ENCODE measurements at regions of chr14 and their contacts with region 1.

Region 1: DNA sequence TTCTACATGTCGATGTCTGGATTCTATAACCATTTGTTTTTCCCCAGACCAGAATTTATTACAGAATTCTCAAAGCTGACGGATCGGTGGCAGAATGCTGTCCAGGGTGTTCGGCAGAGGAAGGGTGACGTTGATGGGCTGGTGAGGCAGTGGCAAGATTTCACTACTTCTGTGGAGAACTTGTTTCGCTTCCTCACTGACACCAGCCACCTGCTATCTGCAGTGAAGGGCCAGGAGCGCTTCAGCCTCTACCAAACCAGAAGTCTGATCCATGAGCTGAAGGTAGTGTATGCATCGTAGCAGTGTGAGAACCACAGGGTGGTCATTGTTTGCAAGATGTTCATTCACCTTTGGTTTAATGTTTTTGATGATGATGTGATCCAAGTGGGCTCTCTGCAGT is 124.0 kb downstream of the ESR2 start:
- DNase-seq: no peak
- H3K4me3 ChIP-seq: no peak overlapping the region
- H3K27ac ChIP-seq: no peak overlapping the region
- H3K4me1 ChIP-seq: no peaks in the 10 kb centered on the region
- H3K27me3 ChIP-seq: no peaks in the 10 kb centered on the region
- CTCF ChIP-seq: no peak

Region 2: GRCh38 chr14:64062381-64063115 is 107.6 kb before region 1 on chr14:
- CTCF ChIA-PET with region 1: no interaction called
- POLR2A ChIA-PET with region 1: interaction called, 11 read pairs
- intact Hi-C with region 1: no loop called
- DNase-seq: no peak
- H3K4me3 ChIP-seq: no peak overlapping the region
- H3K27ac ChIP-seq: no peak overlapping the region
- H3K4me1 ChIP-seq: peaks cover 24% of the 10 kb centered on the region
- H3K27me3 ChIP-seq: no peaks in the 10 kb centered on the region
- CTCF ChIP-seq: no peak

Region 3: DNA sequence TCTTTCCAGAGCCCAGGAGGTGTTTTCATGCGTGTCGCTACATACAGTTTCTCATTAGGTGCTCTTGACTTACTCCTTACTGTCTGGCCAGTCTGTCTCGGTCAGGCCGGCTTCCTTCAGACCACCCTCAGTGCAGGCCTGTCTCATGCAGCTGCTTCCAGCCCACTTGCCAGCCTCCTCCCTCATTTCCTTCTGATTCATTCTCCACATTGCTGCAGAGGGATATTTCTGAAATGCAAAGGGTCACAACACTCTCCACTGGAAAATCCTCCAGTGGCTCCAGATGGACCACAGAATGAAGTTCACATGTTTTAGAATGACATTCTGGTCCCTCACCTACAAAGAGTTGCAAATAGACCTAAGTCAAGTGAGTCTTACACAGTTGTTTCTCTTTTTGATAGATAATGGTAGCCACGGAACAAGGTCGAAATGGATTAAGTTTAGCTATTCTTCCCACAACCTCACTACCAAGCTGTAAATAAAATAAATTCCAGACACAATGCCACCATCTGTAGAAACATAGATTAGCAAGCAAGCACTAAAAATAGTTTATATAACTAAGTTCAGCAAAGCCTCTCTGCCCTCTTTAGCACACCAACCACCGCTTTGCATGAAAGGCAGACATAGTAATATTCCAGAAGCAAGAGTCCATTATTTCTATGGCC is 22.9 kb before region 1 on chr14:
- CTCF ChIA-PET with region 1: no interaction called
- POLR2A ChIA-PET with region 1: interaction called, 11 read pairs
- intact Hi-C with region 1: no loop called
- DNase-seq: no peak
- H3K4me3 ChIP-seq: no peak overlapping the region
- H3K27ac ChIP-seq: no peak overlapping the region
- H3K4me1 ChIP-seq: no peaks in the 10 kb centered on the region
- H3K27me3 ChIP-seq: no peaks in the 10 kb centered on the region
- CTCF ChIP-seq: no peak

Measured in PC-9 (cell line).